Endothelial cell of umbilical vein (primary cell): ENCODE measurements at regions of chr7 and their contacts with region 1.

Region 1: GRCh38 chr7:18352339-18353255 is 143.0 kb upstream of the HDAC9 start:
- DNase-seq: peak; percentile 78
- H3K4me3 ChIP-seq: no peak overlapping the region
- H3K27ac ChIP-seq: no peak overlapping the region
- H3K4me1 ChIP-seq: peaks cover 2% of the 10 kb centered on the region
- H3K27me3 ChIP-seq: no peaks in the 10 kb centered on the region
- CTCF ChIP-seq: peak; percentile 40 to 55
- POLR2A ChIP-seq: no peak

Region 2: DNA sequence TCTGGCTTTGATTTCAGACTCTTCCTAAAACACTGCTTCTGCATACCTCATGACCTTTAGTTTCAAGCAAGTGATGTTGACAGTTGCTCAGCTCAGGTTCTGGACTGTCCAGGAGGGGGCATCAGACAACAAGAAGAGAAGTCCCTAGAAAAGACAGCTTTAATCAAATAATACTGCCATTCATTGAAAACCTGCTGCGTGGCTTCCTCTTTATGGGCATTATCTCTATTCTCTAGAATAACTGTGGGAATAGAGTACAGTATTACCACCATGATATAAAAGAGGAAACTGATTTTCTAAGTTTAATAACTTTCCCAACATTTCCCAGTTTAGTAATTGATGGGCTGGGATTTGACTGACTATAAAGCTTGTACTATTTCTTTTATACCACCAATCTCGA is 582.7 kb before region 1 on chr7:
- CTCF ChIA-PET with region 1: interaction called, 331 read pairs
- POLR2A ChIA-PET with region 1: no interaction called
- dilution Hi-C with region 1: no loop called
- intact Hi-C with region 1: no loop called
- DNase-seq: peak; percentile 64
- H3K4me3 ChIP-seq: no peak overlapping the region
- H3K27ac ChIP-seq: no peak overlapping the region
- H3K4me1 ChIP-seq: no peaks in the 10 kb centered on the region
- H3K27me3 ChIP-seq: no peaks in the 10 kb centered on the region
- CTCF ChIP-seq: peak; percentile 71 to 75
- POLR2A ChIP-seq: no peak

Region 3: DNA sequence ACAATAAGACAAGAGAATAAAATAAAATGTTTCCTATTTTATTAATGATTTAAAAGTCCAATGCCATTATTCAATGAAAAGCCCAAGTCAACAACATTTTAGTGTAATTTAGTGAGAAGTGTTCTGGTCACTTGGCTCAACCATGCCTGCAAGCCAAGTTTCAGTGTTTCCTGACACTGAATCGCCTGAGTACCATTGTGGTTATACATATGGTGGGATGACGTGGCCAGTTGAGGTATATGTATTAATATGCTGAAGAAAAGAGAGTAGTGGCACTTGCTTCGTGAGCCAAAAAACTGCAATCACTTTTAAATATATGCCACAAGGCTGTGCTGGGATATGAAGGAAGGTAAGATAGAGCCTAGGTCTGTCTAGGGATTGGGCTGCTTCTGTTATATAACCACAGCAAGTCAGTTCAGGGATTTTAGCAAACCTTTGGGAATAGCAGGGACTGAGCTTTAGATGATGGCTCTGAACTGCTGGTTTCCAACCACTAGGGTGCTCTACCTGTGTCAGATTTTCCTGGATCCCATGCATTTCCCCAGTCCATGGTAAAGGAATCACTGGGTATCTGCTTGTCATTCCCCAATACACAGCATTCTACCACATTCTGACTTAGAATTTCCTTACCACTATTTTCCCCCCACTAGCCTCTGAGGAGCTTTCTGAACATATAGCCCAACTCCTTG is 110.9 kb before region 1 on chr7:
- CTCF ChIA-PET with region 1: no interaction called
- POLR2A ChIA-PET with region 1: no interaction called
- dilution Hi-C with region 1: no loop called
- intact Hi-C with region 1: no loop called
- DNase-seq: no peak
- H3K4me3 ChIP-seq: no peak overlapping the region
- H3K27ac ChIP-seq: no peak overlapping the region
- H3K4me1 ChIP-seq: no peaks in the 10 kb centered on the region
- H3K27me3 ChIP-seq: no peaks in the 10 kb centered on the region
- CTCF ChIP-seq: no peak
- POLR2A ChIP-seq: no peak

Region 4: DNA sequence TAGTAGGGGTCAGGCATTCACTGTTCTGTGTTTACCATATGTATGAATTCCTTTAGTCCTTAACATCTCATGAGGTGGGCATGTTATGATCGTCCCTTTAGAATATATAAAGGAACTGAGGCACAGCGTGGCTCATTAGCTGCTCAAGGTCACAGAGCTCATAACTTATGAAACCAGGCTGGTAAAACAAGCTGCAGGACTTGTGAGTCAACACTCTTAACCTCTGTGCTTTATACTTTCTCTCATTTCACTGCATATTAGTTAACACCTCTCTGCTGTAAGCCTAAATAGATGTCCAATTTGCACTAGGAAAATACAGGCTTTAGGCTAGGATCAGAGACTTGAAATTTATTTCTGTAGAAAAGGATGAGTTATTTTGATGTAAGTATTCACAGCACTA is 37.4 kb before region 1 on chr7:
- CTCF ChIA-PET with region 1: no interaction called
- POLR2A ChIA-PET with region 1: no interaction called
- dilution Hi-C with region 1: no loop called
- intact Hi-C with region 1: no loop called
- DNase-seq: no peak
- H3K4me3 ChIP-seq: no peak overlapping the region
- H3K27ac ChIP-seq: no peak overlapping the region
- H3K4me1 ChIP-seq: no peaks in the 10 kb centered on the region
- H3K27me3 ChIP-seq: no peaks in the 10 kb centered on the region
- CTCF ChIP-seq: no peak
- POLR2A ChIP-seq: no peak

Region 5: DNA sequence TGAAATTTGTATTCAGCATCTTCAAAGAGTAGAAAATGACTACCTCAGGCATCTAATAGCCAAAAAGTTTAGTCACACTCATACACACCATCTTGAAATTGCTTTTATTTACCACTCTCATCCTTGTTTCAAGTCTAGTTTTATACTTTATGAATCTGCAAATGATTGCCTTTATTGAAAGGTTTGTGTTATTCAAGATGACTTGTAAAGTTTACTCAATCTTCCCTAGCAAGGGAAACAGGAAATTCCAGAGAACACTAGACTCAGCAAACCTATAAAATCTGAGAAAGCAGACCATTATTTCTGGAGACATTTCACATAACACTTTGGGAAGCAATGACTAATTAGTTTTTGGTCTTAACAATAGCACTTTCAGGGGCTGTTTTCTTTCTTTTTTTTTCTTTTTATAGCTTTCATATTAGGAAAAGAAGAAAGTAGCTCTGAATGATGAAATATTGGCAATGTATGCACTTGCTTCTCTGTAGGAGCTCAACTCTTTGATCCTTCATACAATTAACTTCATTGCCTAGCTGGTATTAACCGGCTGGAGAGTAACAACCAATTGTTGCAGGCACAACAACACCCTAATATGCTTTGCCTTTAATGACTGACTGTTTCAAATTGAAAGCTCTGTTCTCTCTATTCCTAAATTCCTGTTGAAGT is 74.1 kb after region 1 on chr7:
- CTCF ChIA-PET with region 1: interaction called, 15 read pairs
- POLR2A ChIA-PET with region 1: no interaction called
- dilution Hi-C with region 1: no loop called
- intact Hi-C with region 1: loop called (anchors 1 kb)
- DNase-seq: peak; percentile 95
- H3K4me3 ChIP-seq: no peak overlapping the region
- H3K27ac ChIP-seq: peak overlapping the region; percentile 70
- H3K4me1 ChIP-seq: peaks cover 29% of the 10 kb centered on the region
- H3K27me3 ChIP-seq: no peaks in the 10 kb centered on the region
- CTCF ChIP-seq: no peak
- POLR2A ChIP-seq: no peak

Region 6: GRCh38 chr7:18565337-18565736 is 212.7 kb after region 1 on chr7:
- CTCF ChIA-PET with region 1: interaction called, 572 read pairs
- POLR2A ChIA-PET with region 1: no interaction called
- dilution Hi-C with region 1: loop called (anchors 25 kb)
- intact Hi-C with region 1: no loop called
- DNase-seq: no peak
- H3K4me3 ChIP-seq: no peak overlapping the region
- H3K27ac ChIP-seq: no peak overlapping the region
- H3K4me1 ChIP-seq: no peaks in the 10 kb centered on the region
- H3K27me3 ChIP-seq: no peaks in the 10 kb centered on the region
- CTCF ChIP-seq: no peak
- POLR2A ChIP-seq: no peak

Region 7: DNA sequence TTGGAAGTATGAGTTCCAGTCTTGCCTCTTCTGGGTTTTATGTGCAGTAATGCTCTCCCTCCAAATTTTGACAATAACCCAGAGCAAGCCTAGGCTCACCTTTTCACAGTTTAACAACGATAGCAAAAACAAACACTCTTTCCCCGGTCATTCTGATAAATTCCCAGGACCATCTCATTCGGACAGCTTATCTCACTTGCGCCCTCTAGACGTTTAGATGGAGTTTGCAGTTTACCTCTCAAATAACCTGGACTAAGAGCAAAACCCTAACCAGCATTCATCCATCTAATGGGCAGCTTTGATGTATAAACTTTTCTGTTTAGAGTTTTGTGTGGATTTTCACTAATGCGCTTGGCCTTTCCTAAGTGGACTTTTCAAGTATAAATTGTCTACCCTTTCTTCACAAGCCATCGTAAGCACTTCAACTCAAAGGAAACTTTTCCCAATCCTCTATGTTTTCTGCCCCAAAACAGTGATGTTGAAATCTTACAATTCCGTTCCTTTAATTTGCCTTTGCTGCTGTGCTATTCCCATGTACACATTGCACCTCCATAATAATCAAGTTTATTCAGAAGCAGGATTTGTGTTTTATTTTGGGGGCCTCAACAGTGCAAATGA is 257.8 kb after region 1 on chr7:
- CTCF ChIA-PET with region 1: interaction called, 43 read pairs
- POLR2A ChIA-PET with region 1: no interaction called
- dilution Hi-C with region 1: no loop called
- intact Hi-C with region 1: loop called (anchors 1 kb)
- DNase-seq: peak; percentile 38
- H3K4me3 ChIP-seq: no peak overlapping the region
- H3K27ac ChIP-seq: no peak overlapping the region
- H3K4me1 ChIP-seq: no peaks in the 10 kb centered on the region
- H3K27me3 ChIP-seq: no peaks in the 10 kb centered on the region
- CTCF ChIP-seq: peak; percentile 52 to 66
- POLR2A ChIP-seq: no peak

Region 8: GRCh38 chr7:19442016-19442785 is 1089.6 kb after region 1 on chr7:
- CTCF ChIA-PET with region 1: interaction called, 4 read pairs
- POLR2A ChIA-PET with region 1: no interaction called
- dilution Hi-C with region 1: no loop called
- intact Hi-C with region 1: loop called (anchors 5 kb)
- DNase-seq: peak; percentile 30
- H3K4me3 ChIP-seq: no peak overlapping the region
- H3K27ac ChIP-seq: no peak overlapping the region
- H3K4me1 ChIP-seq: no peaks in the 10 kb centered on the region
- H3K27me3 ChIP-seq: peaks cover 0 to 3% of the 10 kb centered on the region in 2 experiments
- CTCF ChIP-seq: peak; percentile 20 to 21
- POLR2A ChIP-seq: no peak